MCF 10A (cell line): ENCODE measurements at regions of chr3 and their contacts with region 1.

Region 1: GRCh38 chr3:98593046-98593936 is at the start of gene CPOX:
- DNase-seq: peak; percentile 86
- H3K4me3 Mint-ChIP-seq: peak within 1 kb of the TSS; percentile 84
- H3K27ac Mint-ChIP-seq: peak within 1 kb of the TSS; percentile 33
- H3K4me1 Mint-ChIP-seq: peaks cover 18% of the 10 kb centered on the region
- H3K27me3 Mint-ChIP-seq: no peaks in the 10 kb centered on the region
- CTCF ChIP-seq: no peak
- total RNA-seq, gene CPOX: 10.8 and 11.2 TPM in 2 replicates

Region 2: DNA sequence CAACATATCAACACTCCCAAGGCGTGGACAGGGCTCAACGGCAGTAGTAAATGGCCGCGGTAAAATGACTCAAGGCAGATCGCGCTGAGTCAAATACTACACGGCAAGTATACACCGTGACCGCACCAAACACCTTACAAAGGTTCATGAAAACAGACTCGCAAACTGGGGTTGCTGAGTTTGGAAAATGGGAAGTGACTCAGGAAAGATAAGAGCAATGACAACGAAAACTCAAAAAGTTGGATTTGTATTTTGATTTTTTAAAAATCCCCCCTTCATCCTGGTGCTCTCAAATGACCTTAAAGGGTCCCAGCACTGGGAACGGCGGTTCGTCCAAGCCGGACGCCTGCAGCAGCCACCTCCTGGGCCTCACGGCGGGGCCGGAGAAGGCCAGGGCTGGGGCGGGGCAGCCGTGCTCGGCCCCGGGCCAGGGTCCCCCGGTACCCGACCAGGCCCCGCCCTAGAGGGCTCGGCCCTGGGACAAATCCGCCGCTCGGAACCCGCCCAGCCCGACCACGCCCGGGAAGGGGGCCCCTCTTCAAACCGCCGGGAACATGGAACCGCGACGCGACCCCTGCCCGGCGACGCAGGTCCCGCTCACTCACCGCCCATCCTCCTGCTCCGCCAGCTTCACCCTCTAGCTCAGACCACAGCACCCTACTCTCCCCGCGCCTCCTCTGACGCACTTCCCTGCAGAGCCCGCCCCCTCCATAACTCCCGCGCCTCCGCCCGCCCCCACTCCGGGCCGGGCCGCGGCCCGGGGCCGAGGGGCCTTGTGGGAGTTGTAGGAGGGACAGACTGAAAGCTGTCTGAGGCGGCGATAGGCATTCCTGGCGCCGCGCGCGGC is 70.8 kb before region 1 on chr3 and contains the start of gene CLDND1:
- CTCF ChIA-PET with region 1: no interaction called
- POLR2A ChIA-PET with region 1: interaction called, 11 read pairs
- intact Hi-C with region 1: no loop called
- DNase-seq: peak; percentile 98
- H3K4me3 Mint-ChIP-seq: peak within 1 kb of the TSS; percentile 85
- H3K27ac Mint-ChIP-seq: peak within 1 kb of the TSS; percentile 81
- H3K4me1 Mint-ChIP-seq: peaks cover 27% of the 10 kb centered on the region
- H3K27me3 Mint-ChIP-seq: no peaks in the 10 kb centered on the region
- CTCF ChIP-seq: no peak
- total RNA-seq, gene CLDND1: 128 and 173 TPM in 2 replicates

Region 3: GRCh38 chr3:98705706-98706105 is 112.4 kb after region 1 on chr3:
- CTCF ChIA-PET with region 1: no interaction called
- POLR2A ChIA-PET with region 1: no interaction called
- intact Hi-C with region 1: loop called (anchors 1 kb)
- DNase-seq: peak; percentile 32
- H3K4me3 Mint-ChIP-seq: no peak overlapping the region
- H3K27ac Mint-ChIP-seq: no peak overlapping the region
- H3K4me1 Mint-ChIP-seq: no peaks in the 10 kb centered on the region
- H3K27me3 Mint-ChIP-seq: no peaks in the 10 kb centered on the region
- CTCF ChIP-seq: peak; percentile 22

Region 4: DNA sequence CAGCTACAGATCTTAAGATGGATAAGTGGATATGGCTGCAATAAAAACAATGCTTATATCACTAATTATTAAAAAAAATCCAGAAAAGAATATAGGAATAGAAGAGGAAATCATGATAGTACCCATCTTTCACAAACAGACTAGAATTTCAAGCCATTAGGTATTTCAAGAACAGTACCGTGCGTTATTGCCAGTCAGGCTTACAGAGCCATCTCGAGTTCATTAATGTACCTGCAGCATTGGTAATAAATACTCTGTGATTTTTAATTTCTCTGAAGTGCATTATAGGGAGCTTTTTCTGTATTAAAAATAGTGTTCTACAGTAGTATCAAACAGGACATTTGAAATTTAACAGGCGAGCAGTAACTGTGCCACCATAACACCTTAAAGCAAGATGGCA is 205.5 kb after region 1 on chr3:
- CTCF ChIA-PET with region 1: interaction called, 15 read pairs
- POLR2A ChIA-PET with region 1: no interaction called
- intact Hi-C with region 1: no loop called
- DNase-seq: no peak
- H3K4me3 Mint-ChIP-seq: no peak overlapping the region
- H3K27ac Mint-ChIP-seq: no peak overlapping the region
- H3K4me1 Mint-ChIP-seq: peaks cover 5% of the 10 kb centered on the region
- H3K27me3 Mint-ChIP-seq: no peaks in the 10 kb centered on the region
- CTCF ChIP-seq: no peak

Region 5: DNA sequence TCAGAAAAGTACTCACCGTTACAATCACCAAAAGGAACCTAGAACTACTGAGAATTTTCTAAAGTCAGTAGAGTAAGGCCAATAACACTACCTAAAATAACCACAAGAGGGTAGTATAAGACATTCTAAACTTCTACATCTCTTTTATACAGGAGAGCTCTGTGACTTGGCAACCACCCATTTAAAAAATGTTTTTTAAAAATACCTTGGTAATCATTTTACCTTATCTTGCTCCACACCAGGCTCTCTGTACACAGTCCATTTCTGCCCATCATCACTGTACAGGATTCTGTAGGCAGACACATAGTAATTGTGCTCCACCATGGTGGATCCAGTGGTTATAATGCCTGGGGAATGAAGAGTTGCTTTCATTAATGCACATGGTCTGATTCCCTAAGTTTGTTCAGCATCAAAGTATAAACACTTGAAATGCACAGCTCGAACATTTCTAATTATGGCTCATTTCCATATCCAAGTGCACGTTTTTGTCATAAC is 224.3 kb after region 1 on chr3:
- CTCF ChIA-PET with region 1: interaction called, 407 read pairs
- POLR2A ChIA-PET with region 1: interaction called, 4 read pairs
- intact Hi-C with region 1: no loop called
- DNase-seq: peak; percentile 50
- H3K4me3 Mint-ChIP-seq: no peak overlapping the region
- H3K27ac Mint-ChIP-seq: peak overlapping the region; percentile 27
- H3K4me1 Mint-ChIP-seq: peaks cover 13% of the 10 kb centered on the region
- H3K27me3 Mint-ChIP-seq: no peaks in the 10 kb centered on the region
- CTCF ChIP-seq: peak; percentile 53